Activated B cell treated with CpG ODN at 0.5 μM for 24 hours (primary cell): ENCODE measurements at regions of chr14 and their contacts with region 1.

Region 1: DNA sequence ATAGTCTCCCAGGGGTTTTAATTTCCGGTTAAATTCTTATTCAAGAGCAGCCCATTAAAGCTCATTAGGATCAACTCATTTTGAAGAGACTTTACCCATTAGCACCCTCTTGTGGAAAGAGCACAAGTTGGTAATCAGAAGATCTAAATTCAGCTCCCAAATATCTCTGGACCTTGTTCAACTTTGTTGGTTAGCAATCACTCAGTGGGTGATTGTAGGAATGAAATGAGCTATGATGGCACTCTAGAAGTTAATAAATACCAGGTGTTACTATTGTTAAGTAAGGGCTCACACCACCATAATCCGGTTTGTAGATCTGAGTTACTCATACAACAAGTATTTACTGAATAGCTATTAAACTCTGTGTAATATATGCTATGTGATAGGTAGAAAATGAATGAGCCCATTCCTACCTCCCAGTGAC is 42.9 kb downstream of the TRIP11 start:
- DNase-seq: no peak
- ATAC-seq: peak; percentile 66
- H3K4me3 Mint-ChIP-seq: no peak overlapping the region
- H3K27ac Mint-ChIP-seq: peak overlapping the region; percentile 6
- H3K4me1 Mint-ChIP-seq: peaks cover 8% of the 10 kb centered on the region
- H3K27me3 Mint-ChIP-seq: no peaks in the 10 kb centered on the region
- CTCF ChIP-seq: no peak

Region 2: GRCh38 chr14:91482263-91483013 is 514.5 kb before region 1 on chr14:
- CTCF ChIA-PET with region 1: interaction called, 7 read pairs
- POLR2A ChIA-PET with region 1: no interaction called
- intact Hi-C with region 1: loop called (anchors 2 kb)
- DNase-seq: no peak
- ATAC-seq: no peak
- H3K4me3 Mint-ChIP-seq: no peak overlapping the region
- H3K27ac Mint-ChIP-seq: no peak overlapping the region
- H3K4me1 Mint-ChIP-seq: peaks cover 71% of the 10 kb centered on the region
- H3K27me3 Mint-ChIP-seq: no peaks in the 10 kb centered on the region
- CTCF ChIP-seq: no peak

Region 3: GRCh38 chr14:91649930-91650329 is 347.0 kb before region 1 on chr14:
- CTCF ChIA-PET with region 1: interaction called, 60 read pairs
- POLR2A ChIA-PET with region 1: no interaction called
- intact Hi-C with region 1: loop called (anchors 1 kb)
- DNase-seq: no peak
- ATAC-seq: peak; percentile 62
- H3K4me3 Mint-ChIP-seq: no peak overlapping the region
- H3K27ac Mint-ChIP-seq: no peak overlapping the region
- H3K4me1 Mint-ChIP-seq: no peaks in the 10 kb centered on the region
- H3K27me3 Mint-ChIP-seq: peaks cover 16% of the 10 kb centered on the region
- CTCF ChIP-seq: peak; percentile 18

Region 4: DNA sequence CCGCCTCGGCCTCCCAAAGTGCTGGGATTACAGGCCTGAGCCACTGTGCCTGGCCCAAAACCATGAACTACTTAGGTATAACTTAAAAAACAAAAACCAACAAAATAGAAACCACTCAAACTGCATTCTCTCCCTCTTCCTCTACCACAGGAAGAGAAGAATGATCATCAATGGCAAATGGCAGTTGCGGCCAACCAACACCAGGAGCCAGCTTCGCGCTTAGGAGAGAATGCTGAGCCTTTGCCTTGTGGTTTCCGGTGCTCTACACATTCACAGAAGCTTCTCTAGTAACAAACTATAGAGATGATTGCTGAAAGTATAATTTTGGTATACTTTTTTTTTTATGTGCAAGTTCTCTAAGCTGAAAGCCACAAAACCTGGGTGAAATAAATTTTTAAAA is 282.2 kb before region 1 on chr14:
- CTCF ChIA-PET with region 1: no interaction called
- POLR2A ChIA-PET with region 1: no interaction called
- intact Hi-C with region 1: loop called (anchors 2 kb)
- DNase-seq: no peak
- ATAC-seq: no peak
- H3K4me3 Mint-ChIP-seq: no peak overlapping the region
- H3K27ac Mint-ChIP-seq: no peak overlapping the region
- H3K4me1 Mint-ChIP-seq: no peaks in the 10 kb centered on the region
- H3K27me3 Mint-ChIP-seq: peaks cover 2% of the 10 kb centered on the region
- CTCF ChIP-seq: no peak

Region 5: DNA sequence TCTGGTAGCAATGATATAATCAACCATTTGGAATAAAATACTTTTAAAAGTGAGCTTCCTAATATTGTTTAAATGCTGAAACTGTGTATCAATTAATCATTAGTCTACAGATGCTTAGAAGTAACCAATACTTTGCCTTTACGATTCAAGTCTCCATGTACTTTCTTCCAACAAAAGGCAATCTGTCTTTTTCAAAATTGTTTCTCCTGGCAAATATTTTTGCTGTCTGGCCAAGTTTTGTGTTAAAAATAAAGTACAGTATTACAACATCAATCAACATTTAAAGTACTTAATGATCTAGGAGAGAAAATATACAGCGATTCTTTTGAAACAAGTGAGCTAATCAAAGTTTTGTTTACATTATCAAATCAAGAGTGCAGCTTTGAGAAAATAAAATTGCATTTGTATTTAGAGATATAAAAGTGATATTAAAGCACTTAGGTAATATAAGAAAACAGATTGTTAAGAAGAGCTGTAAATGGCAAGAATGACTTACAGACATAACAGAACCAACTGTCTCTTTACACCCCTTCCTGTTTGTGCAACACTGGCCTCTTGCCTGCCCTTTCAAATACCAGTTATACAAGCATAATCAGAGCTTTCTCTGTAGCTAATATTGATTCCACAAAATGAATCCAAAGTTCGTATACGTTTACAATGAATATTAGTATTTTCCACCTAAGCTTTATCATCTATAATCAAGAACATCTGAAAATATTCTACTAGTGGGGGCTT is 11.3 kb before region 1 on chr14:
- CTCF ChIA-PET with region 1: interaction called, 14 read pairs
- POLR2A ChIA-PET with region 1: no interaction called
- intact Hi-C with region 1: no loop called
- DNase-seq: no peak
- ATAC-seq: no peak
- H3K4me3 Mint-ChIP-seq: no peak overlapping the region
- H3K27ac Mint-ChIP-seq: no peak overlapping the region
- H3K4me1 Mint-ChIP-seq: no peaks in the 10 kb centered on the region
- H3K27me3 Mint-ChIP-seq: no peaks in the 10 kb centered on the region
- CTCF ChIP-seq: no peak